ENCODE measurements at regions of chr2 and their contacts with region 1.

Region 1: GRCh38 chr2:98634401-98635092 is 26.2 kb downstream of the UNC50 start:
- DNase-seq: peak; percentile 42
- H3K4me3 Mint-ChIP-seq: peak overlapping the region; percentile 63
- H3K27ac Mint-ChIP-seq: peak overlapping the region; percentile 91
- H3K4me1 Mint-ChIP-seq: peaks cover 45% of the 10 kb centered on the region
- H3K27me3 Mint-ChIP-seq: no peaks in the 10 kb centered on the region

Region 2: DNA sequence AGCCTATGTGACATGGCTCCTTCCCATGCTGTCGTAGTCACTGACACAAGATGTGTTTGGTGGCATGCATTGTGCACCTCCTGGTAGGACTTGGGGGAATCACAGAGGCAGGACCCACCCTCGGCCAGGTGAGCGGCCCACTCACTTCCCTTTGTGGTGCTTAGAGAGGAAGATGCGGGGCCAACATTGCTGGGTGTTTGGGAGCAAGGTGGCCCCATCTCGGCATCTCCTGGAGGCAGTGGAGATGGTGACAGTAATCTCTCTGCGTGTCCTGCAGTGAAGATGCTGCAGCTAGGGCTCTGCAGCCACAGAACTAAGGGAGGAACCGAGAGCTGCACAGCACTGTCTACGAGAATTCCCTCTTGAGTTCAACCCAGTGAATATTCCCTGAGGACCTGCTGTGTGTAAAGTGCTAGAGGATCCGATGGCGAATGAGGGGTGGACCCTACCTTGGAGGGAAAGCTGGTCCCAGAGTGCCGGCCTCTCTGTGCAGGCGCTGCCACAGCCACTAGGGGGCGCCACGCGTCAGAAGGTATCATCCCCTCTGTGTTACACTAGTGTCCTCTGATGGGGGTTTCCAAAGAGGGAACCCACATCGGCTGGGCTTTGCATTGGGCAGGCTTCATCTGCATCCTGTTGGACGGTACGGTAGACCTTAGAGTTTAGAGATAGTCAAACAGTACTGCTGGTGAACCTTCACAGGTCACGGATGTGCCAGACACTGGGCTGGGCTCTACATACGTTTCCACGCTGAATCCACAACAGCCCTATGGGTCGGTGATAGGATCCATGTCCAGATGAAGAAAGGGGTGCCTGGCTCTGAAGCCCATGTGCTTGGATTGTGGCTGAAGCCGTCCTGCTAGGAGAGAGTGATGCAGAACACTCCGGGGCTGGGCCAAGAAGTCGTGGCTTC is 65.4 kb before region 1 on chr2:
- intact Hi-C with region 1: loop called (anchors 5 kb)
- DNase-seq: peak; percentile 40
- H3K4me3 Mint-ChIP-seq: no peak overlapping the region
- H3K27ac Mint-ChIP-seq: no peak overlapping the region
- H3K4me1 Mint-ChIP-seq: no peaks in the 10 kb centered on the region
- H3K27me3 Mint-ChIP-seq: no peaks in the 10 kb centered on the region

Region 3: GRCh38 chr2:98608116-98608999 is 26.2 kb before region 1 on chr2 and contains the starts of genes COA5 and UNC50:
- intact Hi-C with region 1: loop called (anchors 1 kb)
- DNase-seq: peak; percentile 90
- H3K4me3 Mint-ChIP-seq: peak within 1 kb of the TSS; percentile 93
- H3K27ac Mint-ChIP-seq: peak within 1 kb of the TSS; percentile 86
- H3K4me1 Mint-ChIP-seq: peaks cover 56% of the 10 kb centered on the region
- H3K27me3 Mint-ChIP-seq: no peaks in the 10 kb centered on the region
- total RNA-seq, gene COA5: 20.9 and 23.9 TPM in 2 replicates
- total RNA-seq, gene UNC50: 39.6 and 40.1 TPM in 2 replicates

Region 4: DNA sequence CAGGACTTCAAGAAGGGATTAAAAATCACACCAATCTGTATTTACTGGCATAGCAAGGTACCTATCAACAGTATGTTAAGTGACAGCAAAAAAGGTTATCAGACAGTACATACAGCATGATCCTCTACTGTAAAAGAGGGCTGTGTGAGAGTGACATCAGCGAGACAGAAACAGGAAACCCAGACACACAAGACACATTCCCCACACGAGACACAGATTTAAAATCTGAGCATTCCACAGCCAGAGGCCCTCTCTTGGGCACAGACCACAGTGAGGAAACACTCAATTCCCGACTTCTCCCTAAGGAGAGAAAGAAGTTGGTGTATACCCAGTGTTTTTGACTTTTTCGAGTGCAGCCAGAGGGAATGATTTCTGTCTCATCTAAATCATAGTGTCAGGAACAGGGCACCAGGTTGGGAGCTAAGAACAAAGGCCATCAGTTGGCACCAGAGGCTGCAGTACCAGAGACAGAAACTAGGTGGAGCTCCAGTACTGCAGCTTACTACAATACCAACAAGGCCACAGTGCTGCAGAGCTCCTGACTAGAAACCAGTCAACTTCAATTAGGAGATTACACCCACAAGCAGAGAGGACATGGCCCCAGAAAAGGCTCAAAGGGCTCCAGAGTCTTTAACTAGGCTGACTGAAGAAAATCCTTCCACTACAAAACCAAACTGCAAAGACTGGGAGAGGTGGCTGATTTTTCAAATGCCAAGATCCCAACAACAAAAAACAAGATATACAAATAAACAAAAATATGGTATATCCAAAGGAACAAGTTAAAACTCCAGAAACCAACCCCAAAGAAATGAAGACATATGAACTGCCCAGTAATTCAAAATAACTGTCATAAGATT is 14.8 kb after region 1 on chr2:
- intact Hi-C with region 1: loop called (anchors 1 kb)
- DNase-seq: peak; percentile 68
- H3K4me3 Mint-ChIP-seq: no peak overlapping the region
- H3K27ac Mint-ChIP-seq: peak overlapping the region; percentile 48
- H3K4me1 Mint-ChIP-seq: peaks cover 49% of the 10 kb centered on the region
- H3K27me3 Mint-ChIP-seq: no peaks in the 10 kb centered on the region

Region 5: DNA sequence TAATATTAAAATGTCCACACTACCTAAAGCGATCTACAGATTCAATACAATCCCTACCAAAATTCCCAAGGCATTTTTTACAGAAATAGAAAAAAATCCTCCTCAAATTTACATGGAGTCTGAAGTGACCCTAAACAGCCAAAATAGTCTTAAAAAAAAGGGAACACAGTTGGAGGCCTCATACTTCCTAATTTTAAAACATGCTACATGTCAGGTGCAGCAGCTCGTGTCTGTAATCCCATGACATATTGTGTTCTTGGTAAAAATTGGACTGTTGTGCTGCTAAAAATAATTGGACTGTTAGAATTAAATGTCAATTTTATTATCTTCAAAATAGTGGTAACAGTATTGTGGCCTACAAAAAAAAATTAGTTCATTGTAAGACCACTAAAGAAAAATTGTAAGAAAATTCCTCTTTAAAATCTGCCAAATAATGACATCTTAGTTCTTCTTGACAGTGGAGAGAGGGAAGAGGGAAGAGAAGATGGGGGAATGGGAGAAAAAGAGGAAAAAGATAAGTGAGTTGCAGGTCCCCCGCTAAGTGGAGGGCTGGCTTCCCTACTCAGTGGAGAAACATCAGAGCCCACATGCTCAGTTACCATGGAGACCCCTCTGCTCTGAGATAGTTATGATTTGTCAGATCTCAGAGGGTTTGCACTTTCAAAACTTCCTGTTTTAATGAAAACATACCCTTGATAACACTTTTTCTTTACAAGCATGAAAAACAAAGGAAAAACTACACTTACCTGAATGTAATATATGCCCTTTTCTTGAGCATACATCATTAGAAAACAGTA is 20.4 kb after region 1 on chr2:
- intact Hi-C with region 1: loop called (anchors 1 kb)
- DNase-seq: no peak
- H3K4me3 Mint-ChIP-seq: peak overlapping the region; percentile 28
- H3K27ac Mint-ChIP-seq: peak overlapping the region; percentile 73
- H3K4me1 Mint-ChIP-seq: peaks cover 77% of the 10 kb centered on the region
- H3K27me3 Mint-ChIP-seq: no peaks in the 10 kb centered on the region

Region 6: GRCh38 chr2:99066075-99066958 is 431.8 kb after region 1 on chr2:
- intact Hi-C with region 1: loop called (anchors 5 kb)
- DNase-seq: peak; percentile 17
- H3K4me3 Mint-ChIP-seq: no peak overlapping the region
- H3K27ac Mint-ChIP-seq: no peak overlapping the region
- H3K4me1 Mint-ChIP-seq: no peaks in the 10 kb centered on the region
- H3K27me3 Mint-ChIP-seq: peaks cover 3% of the 10 kb centered on the region

Measured in activated T-helper 2 cell treated with anti-CD3 and anti-CD28 coated beads, Interferon-gamma antibody, Interleukin-2, Interleukin-4, amounts not matched to agents 10 μg/mL and 5 μg/mL and 100 μg/mL, durations not matched to agents 14 hours and 24 hours and 36 hours (primary cell).